Activated T-helper 1 cell treated with anti-CD3 and anti-CD28 coated beads, Interleukin-12 subunit alpha, Interleukin-12 subunit beta, Interleukin-2, Interleukin-4 antibody, amounts not matched to agents 30 ng/mL and 10 ng/mL and 1 ng/mL, durations not matched to agents 14 hours and 24 hours and 36 hours (primary cell): ENCODE measurements at regions of chr9 and their contacts with region 1.

Region 1: DNA sequence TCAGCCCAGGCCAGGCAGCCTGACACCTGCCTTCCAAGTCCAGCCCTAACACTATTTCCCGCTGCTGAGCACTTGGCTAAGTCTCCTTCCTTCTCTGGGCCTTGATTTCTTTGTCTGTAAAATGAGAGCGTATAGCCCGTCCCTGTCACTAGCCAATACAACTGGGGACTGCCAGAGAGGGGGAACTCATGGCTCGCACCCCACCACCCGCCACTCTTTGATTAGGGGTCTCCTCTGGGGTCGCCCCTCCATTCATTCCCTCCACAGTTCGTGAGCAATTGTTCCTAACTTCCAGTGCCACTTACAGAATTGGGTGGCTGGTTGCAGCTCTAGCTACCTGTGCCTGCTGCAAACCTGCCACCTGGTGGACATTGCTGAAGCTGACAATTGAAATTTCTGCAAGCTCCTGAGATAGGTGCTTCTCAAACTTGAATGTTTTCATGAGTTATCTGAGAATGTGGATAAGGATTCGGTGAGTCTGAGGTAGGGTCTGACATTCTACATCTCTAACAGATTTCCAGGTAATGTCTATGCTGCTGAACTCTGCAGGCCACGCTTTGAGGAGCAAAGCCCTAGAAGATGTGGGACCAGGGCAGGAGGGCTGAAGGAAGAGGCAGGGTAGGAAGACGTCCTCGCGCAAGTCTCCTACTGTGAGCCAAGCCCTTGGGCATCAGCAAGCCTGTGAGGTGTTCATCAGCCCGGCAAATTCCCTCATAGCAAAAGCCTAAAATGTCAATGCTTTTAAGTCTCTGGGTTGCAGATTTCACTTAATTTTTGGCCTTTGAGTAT is 13.3 kb upstream of the RECK start:
- DNase-seq: peak; percentile 44
- H3K4me3 Mint-ChIP-seq: no peak overlapping the region
- H3K27ac Mint-ChIP-seq: no peak overlapping the region
- H3K4me1 Mint-ChIP-seq: no peaks in the 10 kb centered on the region
- H3K27me3 Mint-ChIP-seq: peaks cover 10% of the 10 kb centered on the region

Region 2: DNA sequence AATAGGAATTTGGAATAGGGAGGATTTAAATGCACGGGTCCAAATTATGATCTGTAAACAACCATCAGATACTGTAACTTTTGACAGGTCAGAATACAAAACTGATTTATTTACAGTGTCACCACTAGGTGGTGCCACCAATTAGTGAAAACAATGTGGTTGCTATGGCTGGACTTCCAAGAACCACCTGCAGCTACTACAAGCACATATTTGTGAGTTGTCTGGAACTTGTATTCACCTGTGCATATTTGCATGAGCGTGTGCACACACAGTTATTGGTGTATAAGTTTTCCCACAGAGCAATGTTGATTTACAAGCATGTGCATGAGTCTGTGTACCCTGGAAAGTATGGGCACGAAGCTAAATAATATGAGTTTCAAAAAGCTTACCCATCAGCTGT is 120.4 kb before region 1 on chr9:
- intact Hi-C with region 1: loop called (anchors 1 kb)
- DNase-seq: peak; percentile 22
- H3K4me3 Mint-ChIP-seq: no peak overlapping the region
- H3K27ac Mint-ChIP-seq: no peak overlapping the region
- H3K4me1 Mint-ChIP-seq: peaks cover 5% of the 10 kb centered on the region
- H3K27me3 Mint-ChIP-seq: peaks cover 10% of the 10 kb centered on the region

Region 3: DNA sequence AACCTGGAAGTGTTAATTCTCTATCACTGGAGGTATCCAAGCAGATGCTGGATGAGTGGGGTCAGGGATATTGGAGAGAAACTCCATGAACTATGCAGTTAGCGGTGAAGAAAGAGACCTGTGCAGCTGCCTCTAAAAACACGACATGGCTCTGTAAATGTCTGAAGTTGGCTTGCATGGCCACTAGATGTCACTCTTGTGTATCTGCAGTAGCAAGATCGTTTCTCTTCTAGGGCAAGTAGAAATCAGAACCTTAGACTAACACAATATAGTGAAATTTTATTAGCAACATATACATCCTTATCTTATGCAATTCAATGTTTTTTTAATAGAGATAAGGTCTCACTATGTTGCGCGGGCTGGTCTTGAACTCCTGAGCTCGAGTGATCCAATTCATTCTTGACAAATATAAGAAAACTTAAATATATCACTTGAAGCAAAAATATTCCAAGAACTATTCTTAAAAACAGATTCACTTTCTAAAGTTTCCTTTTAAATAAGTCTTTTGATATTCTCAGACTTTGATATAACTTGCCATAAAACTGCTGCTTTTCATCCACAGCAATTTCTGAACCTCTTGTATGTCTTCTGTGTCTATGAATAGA is 68.4 kb before region 1 on chr9:
- intact Hi-C with region 1: loop called (anchors 1 kb)
- DNase-seq: peak; percentile 25
- H3K4me3 Mint-ChIP-seq: no peak overlapping the region
- H3K27ac Mint-ChIP-seq: no peak overlapping the region
- H3K4me1 Mint-ChIP-seq: peaks cover 6% of the 10 kb centered on the region
- H3K27me3 Mint-ChIP-seq: peaks cover 30% of the 10 kb centered on the region

Region 4: GRCh38 chr9:36008774-36009300 is 14.6 kb before region 1 on chr9:
- intact Hi-C with region 1: loop called (anchors 1 kb)
- DNase-seq: peak; percentile 42
- H3K4me3 Mint-ChIP-seq: no peak overlapping the region
- H3K27ac Mint-ChIP-seq: no peak overlapping the region
- H3K4me1 Mint-ChIP-seq: peaks cover 14% of the 10 kb centered on the region
- H3K27me3 Mint-ChIP-seq: peaks cover 19% of the 10 kb centered on the region